ENCODE measurements at regions of chr15 and their contacts with region 1.

Region 1: DNA sequence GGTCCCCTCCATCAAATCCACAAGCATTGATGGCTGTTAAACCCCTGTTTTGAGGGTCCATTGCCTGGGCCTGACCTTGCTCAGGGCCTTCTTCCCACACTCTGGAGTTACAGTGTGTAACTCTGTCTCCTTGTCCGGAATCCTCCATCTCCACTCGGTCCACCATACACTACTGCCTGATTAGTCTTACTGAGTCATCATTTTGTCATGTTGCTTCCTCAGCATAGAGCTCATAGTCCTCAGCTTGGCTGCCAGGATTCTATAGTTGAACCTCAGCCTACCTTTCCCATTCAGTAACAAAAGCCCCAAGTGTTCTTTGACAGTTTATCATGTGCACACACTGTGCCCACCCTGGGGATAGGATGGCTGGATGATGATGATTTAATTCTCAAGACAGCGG is 113.0 kb downstream of the PDE8A start:
- DNase-seq: no peak
- H3K4me3 Mint-ChIP-seq: no peak overlapping the region
- H3K27ac Mint-ChIP-seq: no peak overlapping the region
- H3K4me1 Mint-ChIP-seq: no peaks in the 10 kb centered on the region
- H3K27me3 Mint-ChIP-seq: no peaks in the 10 kb centered on the region
- CTCF ChIP-seq: no peak

Region 2: DNA sequence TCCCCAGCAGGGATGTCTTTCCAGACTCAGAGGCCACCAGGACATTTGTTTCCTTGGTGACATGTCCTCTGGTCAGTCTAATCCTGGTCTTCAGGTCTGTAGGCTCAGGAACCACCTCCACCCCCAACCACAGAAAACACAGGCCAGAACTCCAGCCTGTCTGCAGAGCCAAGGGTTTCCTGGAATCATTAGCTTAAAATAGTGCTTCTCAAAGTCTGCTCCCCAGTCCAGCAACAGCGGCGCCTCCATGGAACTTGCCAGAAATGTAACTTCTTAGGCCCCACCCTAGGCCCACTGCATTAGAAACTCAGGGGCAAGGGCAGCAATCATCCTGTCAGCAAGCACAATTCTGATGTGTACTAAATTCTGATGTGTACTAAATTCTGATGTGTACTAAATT is 190.3 kb before region 1 on chr15:
- CTCF ChIA-PET with region 1: no interaction called
- intact Hi-C with region 1: no loop called
- DNase-seq: no peak
- H3K4me3 Mint-ChIP-seq: no peak overlapping the region
- H3K27ac Mint-ChIP-seq: no peak overlapping the region
- H3K4me1 Mint-ChIP-seq: peaks cover 9% of the 10 kb centered on the region
- H3K27me3 Mint-ChIP-seq: no peaks in the 10 kb centered on the region
- CTCF ChIP-seq: no peak

Region 3: DNA sequence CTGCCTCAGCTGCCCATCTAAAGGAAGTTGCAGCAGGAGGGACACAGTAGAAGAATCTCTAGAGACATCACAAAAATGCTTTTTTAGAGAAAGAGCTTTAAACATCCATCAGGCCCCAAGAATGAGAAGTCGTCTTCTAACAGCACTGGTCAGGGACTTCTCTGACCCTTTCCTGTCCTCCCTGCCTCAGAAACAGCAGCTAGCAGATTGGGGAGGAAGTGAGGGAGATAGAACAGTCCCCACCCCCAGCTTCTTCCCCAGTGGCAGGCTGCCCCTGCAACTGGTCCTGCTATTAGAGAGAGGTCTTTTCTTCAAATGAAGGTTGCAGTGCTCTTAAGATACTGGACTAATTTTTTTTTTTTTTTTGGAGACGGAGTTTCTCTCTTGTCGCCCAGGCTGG is 58.0 kb before region 1 on chr15:
- CTCF ChIA-PET with region 1: interaction called, 12 read pairs
- intact Hi-C with region 1: no loop called
- DNase-seq: no peak
- H3K4me3 Mint-ChIP-seq: no peak overlapping the region
- H3K27ac Mint-ChIP-seq: no peak overlapping the region
- H3K4me1 Mint-ChIP-seq: peaks cover 42% of the 10 kb centered on the region
- H3K27me3 Mint-ChIP-seq: no peaks in the 10 kb centered on the region
- CTCF ChIP-seq: no peak

Region 4: DNA sequence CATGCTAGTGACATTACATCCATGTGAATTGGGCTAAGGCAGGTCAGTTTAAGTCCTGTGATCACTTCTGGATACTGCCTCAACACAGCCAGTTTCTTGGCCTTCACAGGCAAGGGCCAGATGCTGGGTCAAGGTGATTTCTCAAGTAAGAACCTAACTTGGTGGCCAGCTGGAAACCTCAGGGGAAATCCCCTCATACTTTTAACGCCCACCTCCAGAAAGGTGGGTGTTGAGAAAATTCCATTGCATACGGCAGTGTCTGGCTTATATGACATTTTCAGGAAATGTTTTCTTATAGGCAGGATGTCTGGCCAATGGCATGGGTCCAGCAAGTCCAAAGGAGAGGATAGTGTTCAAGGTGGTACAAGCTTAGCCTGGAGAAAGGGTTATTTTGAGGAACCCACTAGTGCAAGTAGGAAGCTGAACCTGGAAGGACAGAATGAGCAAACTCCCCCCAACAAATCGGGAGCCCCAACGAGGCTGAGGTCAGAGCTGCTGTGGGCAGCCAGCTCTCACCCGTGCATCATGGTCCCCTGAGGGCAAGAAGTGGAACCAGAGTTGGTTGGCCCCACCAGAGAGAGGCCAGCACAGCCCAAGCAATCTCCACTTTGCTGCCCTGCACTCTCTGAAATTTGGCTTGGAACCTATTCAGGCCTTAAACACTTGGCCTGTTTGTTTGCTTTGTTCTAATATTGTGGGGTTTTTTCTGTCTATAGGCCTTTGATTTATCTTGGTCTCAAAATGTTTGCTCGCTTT is 22.4 kb after region 1 on chr15:
- CTCF ChIA-PET with region 1: no interaction called
- intact Hi-C with region 1: no loop called
- DNase-seq: no peak
- H3K4me3 Mint-ChIP-seq: no peak overlapping the region
- H3K27ac Mint-ChIP-seq: no peak overlapping the region
- H3K4me1 Mint-ChIP-seq: peaks cover 8% of the 10 kb centered on the region
- H3K27me3 Mint-ChIP-seq: no peaks in the 10 kb centered on the region
- CTCF ChIP-seq: no peak

Region 5: DNA sequence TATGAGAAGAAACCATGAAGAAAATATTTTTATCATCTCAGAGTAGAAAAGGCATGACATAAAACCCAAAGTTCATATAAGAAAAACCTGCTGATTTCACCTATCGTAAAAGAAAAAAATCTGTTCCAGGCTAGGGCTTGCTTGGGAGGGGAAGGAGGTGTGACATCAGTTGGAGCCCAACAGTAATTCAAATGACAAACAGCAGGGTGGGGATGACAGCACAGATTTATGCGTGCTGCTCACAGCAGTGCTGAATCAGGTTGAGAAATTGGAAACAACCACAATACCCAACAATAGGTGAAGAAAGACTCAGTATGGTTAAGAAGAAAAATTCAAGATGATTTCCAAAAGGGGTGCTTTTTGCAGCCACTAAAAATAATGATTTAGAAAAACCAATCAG is 59.4 kb after region 1 on chr15:
- CTCF ChIA-PET with region 1: no interaction called
- intact Hi-C with region 1: loop called (anchors 10 kb)
- DNase-seq: no peak
- H3K4me3 Mint-ChIP-seq: no peak overlapping the region
- H3K27ac Mint-ChIP-seq: no peak overlapping the region
- H3K4me1 Mint-ChIP-seq: no peaks in the 10 kb centered on the region
- H3K27me3 Mint-ChIP-seq: no peaks in the 10 kb centered on the region
- CTCF ChIP-seq: no peak